ENCODE measurements at regions of chr11 and their contacts with region 1.

Region 1: DNA sequence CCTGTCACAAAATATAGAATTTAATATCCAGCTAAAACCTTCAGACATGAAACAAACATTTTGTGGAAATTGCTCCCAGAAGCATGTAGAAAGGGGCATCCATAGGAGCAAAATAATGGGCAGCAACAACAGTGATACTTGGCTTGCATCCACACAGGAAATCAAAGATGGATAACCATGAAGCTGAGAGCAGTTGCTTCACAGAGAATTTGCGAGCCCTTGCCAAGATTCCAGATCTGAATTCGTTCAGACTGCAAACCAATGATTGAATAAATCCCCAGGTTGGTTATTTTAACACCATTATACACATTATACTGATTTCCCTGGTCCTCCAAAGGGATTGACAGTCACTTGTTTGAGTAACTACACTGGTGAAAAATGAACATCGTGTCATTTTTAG is 15.6 kb upstream of the OR51L1 start:
- ATAC-seq: no peak
- H3K4me3 ChIP-seq: no peak overlapping the region
- H3K27ac ChIP-seq: no peak overlapping the region
- H3K4me1 ChIP-seq: no peaks in the 10 kb centered on the region

Region 2: GRCh38 chr11:4916581-4916980 is 62.5 kb before region 1 on chr11:
- in situ Hi-C with region 1: loop called in 1 of 9 experiments (anchors 10 kb)
- ATAC-seq: no peak
- H3K4me3 ChIP-seq: no peak overlapping the region
- H3K27ac ChIP-seq: no peak overlapping the region
- H3K4me1 ChIP-seq: no peaks in the 10 kb centered on the region

Region 3: DNA sequence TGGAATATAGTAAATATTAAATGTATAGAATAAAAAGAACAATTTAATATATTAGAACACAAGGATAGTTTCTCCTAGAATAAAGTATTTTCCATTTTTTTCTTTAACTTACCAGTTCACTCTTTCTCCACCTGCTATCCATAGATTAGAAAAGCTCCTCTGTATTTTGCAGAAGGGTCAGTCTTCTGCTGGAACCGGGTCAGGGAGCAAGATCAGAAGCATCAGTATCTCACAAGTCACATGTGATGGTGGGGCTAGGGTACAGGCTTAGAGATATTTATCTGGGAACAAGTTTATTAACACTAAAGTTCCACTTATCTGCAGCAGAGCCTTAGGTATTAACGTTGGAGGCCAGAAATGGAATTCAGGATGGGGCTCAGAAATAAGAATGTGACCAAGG is 192.8 kb after region 1 on chr11:
- in situ Hi-C with region 1: no loop called
- ATAC-seq: no peak
- H3K4me3 ChIP-seq: no peak overlapping the region
- H3K27ac ChIP-seq: no peak overlapping the region
- H3K4me1 ChIP-seq: no peaks in the 10 kb centered on the region

Region 4: DNA sequence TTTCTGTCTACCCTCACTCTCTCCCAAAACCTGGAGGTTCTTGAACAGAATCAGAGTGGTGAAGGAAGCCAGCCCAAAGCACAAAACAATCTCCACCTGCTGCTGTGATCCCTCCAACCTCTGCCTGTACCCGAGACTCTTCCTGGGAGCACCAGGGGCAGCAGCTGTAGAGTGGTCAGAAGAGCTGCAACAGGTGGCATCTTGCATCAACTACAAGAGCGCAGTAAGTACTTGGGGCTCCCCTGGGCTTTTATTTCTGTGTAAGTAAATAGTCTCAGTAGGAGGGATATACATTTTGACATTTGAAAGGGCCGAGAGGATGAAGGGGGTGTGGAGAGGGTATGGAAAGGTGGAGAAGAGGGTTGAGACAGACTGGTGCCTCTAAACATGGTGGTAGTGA is 545.7 kb after region 1 on chr11:
- in situ Hi-C with region 1: no loop called
- ATAC-seq: no peak
- H3K4me3 ChIP-seq: no peak overlapping the region
- H3K27ac ChIP-seq: no peak overlapping the region
- H3K4me1 ChIP-seq: no peaks in the 10 kb centered on the region

Measured in motor neuron (in vitro differentiated cells).